HCT116 (cell line): ENCODE measurements at regions of chr17 and their contacts with region 1.

Region 1: GRCh38 chr17:75077496-75078283 is 10.1 kb upstream of the SLC16A5 start:
- DNase-seq: no peak
- ATAC-seq: peak; percentile 45
- H3K4me3 ChIP-seq: peak overlapping the region; percentile 31 to 46
- H3K27ac ChIP-seq: peak overlapping the region; percentile 100
- H3K4me1 ChIP-seq: peaks cover 76 to 79% of the 10 kb centered on the region in 2 experiments
- H3K27me3 ChIP-seq: no peaks in the 10 kb centered on the region
- CTCF ChIP-seq: peak in 2 of 3 experiments; percentile 29 to 31; a peak in 2 of 6 replicates
- POLR2A ChIP-seq: no peak
- RAD21 ChIP-seq: no peak; the same call in 1 of the 2 replicates

Region 2: GRCh38 chr17:74994476-74994875 is 83.2 kb before region 1 on chr17:
- CTCF ChIA-PET with region 1: no interaction called
- POLR2A ChIA-PET with region 1: no interaction called
- RAD21 ChIA-PET with region 1: no interaction called
- intact Hi-C with region 1: no loop called
- DNase-seq: no peak
- ATAC-seq: no peak
- H3K4me3 ChIP-seq: no peak overlapping the region
- H3K27ac ChIP-seq: no peak overlapping the region
- H3K4me1 ChIP-seq: peaks cover 29 to 41% of the 10 kb centered on the region in 2 experiments
- H3K27me3 ChIP-seq: no peaks in the 10 kb centered on the region
- CTCF ChIP-seq: no peak
- POLR2A ChIP-seq: no peak
- RAD21 ChIP-seq: no peak

Region 3: GRCh38 chr17:75087558-75088453 is 10.1 kb after region 1 on chr17 and contains the start of gene SLC16A5:
- CTCF ChIA-PET with region 1: interaction called, 11 read pairs
- POLR2A ChIA-PET with region 1: interaction called, 21 read pairs
- RAD21 ChIA-PET with region 1: interaction called in 1 of 2 experiments, 3 read pairs
- intact Hi-C with region 1: no loop called
- DNase-seq: peak; percentile 84
- ATAC-seq: peak; percentile 78
- H3K4me3 ChIP-seq: peak within 1 kb of the TSS; percentile 76 to 83
- H3K27ac ChIP-seq: peak within 1 kb of the TSS; percentile 99
- H3K4me1 ChIP-seq: peaks cover 72 to 89% of the 10 kb centered on the region in 2 experiments
- H3K27me3 ChIP-seq: no peaks in the 10 kb centered on the region
- CTCF ChIP-seq: no peak
- POLR2A ChIP-seq: peak; percentile 77
- RAD21 ChIP-seq: no peak
- total RNA-seq, gene SLC16A5: 79.3 TPM

Region 4: GRCh38 chr17:75096082-75096625 is 18.5 kb after region 1 on chr17:
- CTCF ChIA-PET with region 1: no interaction called
- POLR2A ChIA-PET with region 1: interaction called, 14 read pairs
- RAD21 ChIA-PET with region 1: no interaction called
- intact Hi-C with region 1: loop called (anchors 1 kb)
- DNase-seq: peak; percentile 95
- ATAC-seq: peak; percentile 91
- H3K4me3 ChIP-seq: peak overlapping the region; percentile 23 to 32; a peak in 3 of 4 replicates
- H3K27ac ChIP-seq: peak overlapping the region; percentile 94
- H3K4me1 ChIP-seq: peaks cover 55 to 67% of the 10 kb centered on the region in 2 experiments
- H3K27me3 ChIP-seq: no peaks in the 10 kb centered on the region
- CTCF ChIP-seq: no peak
- POLR2A ChIP-seq: no peak
- RAD21 ChIP-seq: no peak